MCF 10A (cell line): ENCODE measurements at regions of chr20 and their contacts with region 1.

Region 1: DNA sequence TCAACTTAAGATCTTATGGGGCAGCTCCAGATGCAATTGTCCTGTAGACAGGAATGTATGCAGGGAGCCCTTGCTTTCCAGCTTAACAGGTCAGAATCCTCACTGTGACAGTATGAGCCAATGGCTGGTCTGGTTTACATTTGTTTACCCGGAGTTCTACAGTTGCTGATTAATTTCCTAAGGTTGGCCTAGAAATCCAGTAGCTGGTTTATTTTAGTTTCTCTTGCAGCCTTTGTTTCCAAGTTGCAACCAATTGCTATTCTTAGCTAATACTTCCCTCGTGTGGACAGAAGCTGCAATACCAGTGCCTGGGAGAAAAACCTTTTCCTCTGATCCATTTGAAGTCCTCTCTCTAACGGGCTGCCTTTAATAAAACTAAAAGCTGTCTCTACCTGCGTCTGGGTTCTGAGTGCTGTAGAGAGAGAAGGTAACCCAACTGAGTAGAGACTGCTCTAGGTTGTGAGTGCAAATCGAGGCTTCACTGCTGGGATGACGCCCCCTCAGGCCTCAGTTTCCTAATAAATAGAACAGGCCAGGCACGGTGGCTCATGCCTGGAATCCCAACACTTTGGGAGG is 45.9 kb downstream of the ZNF217 start:
- DNase-seq: peak; percentile 65
- H3K4me3 Mint-ChIP-seq: no peak overlapping the region
- H3K27ac Mint-ChIP-seq: no peak overlapping the region
- H3K4me1 Mint-ChIP-seq: no peaks in the 10 kb centered on the region
- H3K27me3 Mint-ChIP-seq: no peaks in the 10 kb centered on the region
- CTCF ChIP-seq: peak; percentile 91

Region 2: DNA sequence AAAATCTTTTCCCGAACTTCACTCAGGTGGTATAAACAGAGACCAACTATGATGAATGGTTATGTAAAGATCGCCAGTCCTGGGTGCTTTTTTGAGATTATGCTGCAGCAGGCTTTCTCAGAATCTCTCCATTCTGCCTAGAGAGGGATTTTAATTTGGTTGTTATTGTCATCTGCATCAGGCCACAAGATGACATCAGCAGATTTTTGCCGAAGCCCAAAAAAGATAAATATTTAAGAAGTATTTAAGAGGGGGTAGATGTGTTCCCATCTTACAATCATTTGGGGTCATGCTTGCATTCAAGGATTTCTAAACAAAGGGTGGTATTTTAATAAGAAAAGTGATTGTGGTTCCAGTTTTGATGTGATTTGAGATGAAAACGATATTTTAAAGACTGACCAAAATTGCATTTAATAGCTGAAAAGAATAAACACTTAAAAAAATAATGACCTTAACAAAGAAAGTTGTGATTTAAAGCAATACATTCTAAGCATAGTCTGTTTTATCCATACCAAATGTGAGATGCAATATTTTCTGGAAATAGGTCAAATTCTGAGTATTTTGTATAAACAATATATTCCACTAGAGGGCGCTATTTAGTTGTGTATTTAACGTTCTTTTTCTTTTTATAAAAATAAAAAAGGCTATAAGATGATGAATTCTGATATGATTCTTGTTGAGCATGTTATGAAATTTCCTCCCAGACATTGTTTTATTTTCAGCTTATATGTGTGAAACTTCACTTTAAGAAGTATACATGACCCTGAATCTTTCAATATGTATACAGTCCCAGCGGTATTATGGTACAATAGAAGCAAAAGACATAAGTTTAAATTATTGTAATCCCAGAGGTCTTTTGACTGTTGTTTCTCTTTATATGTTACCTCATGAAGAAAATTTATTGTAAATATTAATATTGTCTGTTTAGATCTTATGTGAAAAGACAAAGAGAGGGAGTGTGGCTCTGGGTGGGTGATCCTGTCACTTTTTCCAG is 1305.2 kb before region 1 on chr20:
- CTCF ChIA-PET with region 1: interaction called, 21 read pairs
- POLR2A ChIA-PET with region 1: no interaction called
- intact Hi-C with region 1: loop called (anchors 2 kb)
- DNase-seq: peak; percentile 16
- H3K4me3 Mint-ChIP-seq: no peak overlapping the region
- H3K27ac Mint-ChIP-seq: no peak overlapping the region
- H3K4me1 Mint-ChIP-seq: no peaks in the 10 kb centered on the region
- H3K27me3 Mint-ChIP-seq: peaks cover 26% of the 10 kb centered on the region
- CTCF ChIP-seq: peak; percentile 48

Region 3: GRCh38 chr20:52247548-52247947 is 1300.2 kb before region 1 on chr20:
- CTCF ChIA-PET with region 1: interaction called, 12 read pairs
- POLR2A ChIA-PET with region 1: no interaction called
- intact Hi-C with region 1: loop called (anchors 2 kb)
- DNase-seq: no peak
- H3K4me3 Mint-ChIP-seq: no peak overlapping the region
- H3K27ac Mint-ChIP-seq: no peak overlapping the region
- H3K4me1 Mint-ChIP-seq: no peaks in the 10 kb centered on the region
- H3K27me3 Mint-ChIP-seq: peaks cover 4% of the 10 kb centered on the region
- CTCF ChIP-seq: no peak

Region 4: GRCh38 chr20:52379723-52380336 is 1167.9 kb before region 1 on chr20:
- CTCF ChIA-PET with region 1: interaction called, 11 read pairs
- POLR2A ChIA-PET with region 1: no interaction called
- intact Hi-C with region 1: loop called (anchors 1 kb)
- DNase-seq: peak; percentile 36
- H3K4me3 Mint-ChIP-seq: no peak overlapping the region
- H3K27ac Mint-ChIP-seq: no peak overlapping the region
- H3K4me1 Mint-ChIP-seq: no peaks in the 10 kb centered on the region
- H3K27me3 Mint-ChIP-seq: peaks cover 21% of the 10 kb centered on the region
- CTCF ChIP-seq: peak; percentile 88

Region 5: GRCh38 chr20:52747845-52748284 is 799.9 kb before region 1 on chr20:
- CTCF ChIA-PET with region 1: interaction called, 7 read pairs
- POLR2A ChIA-PET with region 1: no interaction called
- intact Hi-C with region 1: loop called (anchors 2 kb)
- DNase-seq: peak; percentile 13
- H3K4me3 Mint-ChIP-seq: no peak overlapping the region
- H3K27ac Mint-ChIP-seq: no peak overlapping the region
- H3K4me1 Mint-ChIP-seq: no peaks in the 10 kb centered on the region
- H3K27me3 Mint-ChIP-seq: peaks cover 16% of the 10 kb centered on the region
- CTCF ChIP-seq: peak; percentile 47

Region 6: GRCh38 chr20:53157443-53158408 is 390.0 kb before region 1 on chr20:
- CTCF ChIA-PET with region 1: no interaction called
- POLR2A ChIA-PET with region 1: no interaction called
- intact Hi-C with region 1: loop called (anchors 2 kb)
- DNase-seq: peak; percentile 54
- H3K4me3 Mint-ChIP-seq: no peak overlapping the region
- H3K27ac Mint-ChIP-seq: no peak overlapping the region
- H3K4me1 Mint-ChIP-seq: peaks cover 7% of the 10 kb centered on the region
- H3K27me3 Mint-ChIP-seq: no peaks in the 10 kb centered on the region
- CTCF ChIP-seq: peak; percentile 51

Region 7: DNA sequence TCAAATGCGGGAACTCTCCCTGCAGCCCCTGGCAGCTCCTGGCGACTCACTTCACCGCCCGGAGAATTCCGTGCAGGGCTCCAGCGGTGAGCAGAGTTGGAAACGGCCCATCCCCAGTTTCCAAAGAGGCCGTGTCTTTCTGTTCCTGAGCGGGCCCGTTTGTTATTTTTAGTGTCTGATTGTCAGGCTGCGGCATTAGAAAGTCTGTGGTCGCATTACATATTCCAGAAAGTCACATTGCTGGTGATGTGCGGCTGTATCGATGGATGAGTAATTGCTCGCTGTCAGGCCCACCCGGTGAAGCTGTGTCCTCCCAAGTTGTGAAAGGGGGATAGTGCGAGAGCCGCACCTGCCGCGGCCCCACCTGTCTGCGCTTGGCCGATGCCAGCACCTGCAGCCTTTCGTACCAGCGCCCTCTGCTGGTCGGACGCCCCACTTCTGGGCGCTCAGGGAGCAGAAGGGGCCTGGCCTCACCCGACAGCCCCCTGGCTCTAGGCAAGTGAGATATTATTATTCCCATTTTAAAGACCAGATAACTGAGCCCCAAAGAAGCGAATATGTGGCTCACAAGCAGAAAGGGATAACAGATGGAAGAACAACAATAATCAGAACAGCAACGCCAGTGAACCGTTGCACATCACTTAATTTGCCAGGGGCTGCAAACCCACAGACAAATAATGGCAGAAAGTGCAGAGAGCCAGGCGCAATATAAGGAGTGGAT is 330.7 kb before region 1 on chr20:
- CTCF ChIA-PET with region 1: interaction called, 15 read pairs
- POLR2A ChIA-PET with region 1: no interaction called
- intact Hi-C with region 1: loop called (anchors 5 kb)
- DNase-seq: peak; percentile 54
- H3K4me3 Mint-ChIP-seq: peak overlapping the region; percentile 30
- H3K27ac Mint-ChIP-seq: no peak overlapping the region
- H3K4me1 Mint-ChIP-seq: no peaks in the 10 kb centered on the region
- H3K27me3 Mint-ChIP-seq: no peaks in the 10 kb centered on the region
- CTCF ChIP-seq: peak; percentile 89

Region 8: GRCh38 chr20:53586640-53587039 is 38.9 kb after region 1 on chr20:
- CTCF ChIA-PET with region 1: no interaction called
- POLR2A ChIA-PET with region 1: no interaction called
- intact Hi-C with region 1: no loop called
- DNase-seq: no peak
- H3K4me3 Mint-ChIP-seq: no peak overlapping the region
- H3K27ac Mint-ChIP-seq: peak overlapping the region; percentile 35
- H3K4me1 Mint-ChIP-seq: peaks cover 28% of the 10 kb centered on the region
- H3K27me3 Mint-ChIP-seq: no peaks in the 10 kb centered on the region
- CTCF ChIP-seq: no peak

Region 9: GRCh38 chr20:53623454-53624211 is 75.9 kb after region 1 on chr20:
- CTCF ChIA-PET with region 1: no interaction called
- POLR2A ChIA-PET with region 1: no interaction called
- intact Hi-C with region 1: no loop called
- DNase-seq: peak; percentile 80
- H3K4me3 Mint-ChIP-seq: peak overlapping the region; percentile 57
- H3K27ac Mint-ChIP-seq: peak overlapping the region; percentile 98
- H3K4me1 Mint-ChIP-seq: peaks cover 18% of the 10 kb centered on the region
- H3K27me3 Mint-ChIP-seq: no peaks in the 10 kb centered on the region
- CTCF ChIP-seq: no peak

Region 10: GRCh38 chr20:53635221-53635924 is 87.6 kb after region 1 on chr20:
- CTCF ChIA-PET with region 1: no interaction called
- POLR2A ChIA-PET with region 1: no interaction called
- intact Hi-C with region 1: no loop called
- DNase-seq: no peak
- H3K4me3 Mint-ChIP-seq: no peak overlapping the region
- H3K27ac Mint-ChIP-seq: no peak overlapping the region
- H3K4me1 Mint-ChIP-seq: peaks cover 11% of the 10 kb centered on the region
- H3K27me3 Mint-ChIP-seq: no peaks in the 10 kb centered on the region
- CTCF ChIP-seq: no peak